ENCODE measurements at regions of chr18 and their contacts with region 1.

Region 1: DNA sequence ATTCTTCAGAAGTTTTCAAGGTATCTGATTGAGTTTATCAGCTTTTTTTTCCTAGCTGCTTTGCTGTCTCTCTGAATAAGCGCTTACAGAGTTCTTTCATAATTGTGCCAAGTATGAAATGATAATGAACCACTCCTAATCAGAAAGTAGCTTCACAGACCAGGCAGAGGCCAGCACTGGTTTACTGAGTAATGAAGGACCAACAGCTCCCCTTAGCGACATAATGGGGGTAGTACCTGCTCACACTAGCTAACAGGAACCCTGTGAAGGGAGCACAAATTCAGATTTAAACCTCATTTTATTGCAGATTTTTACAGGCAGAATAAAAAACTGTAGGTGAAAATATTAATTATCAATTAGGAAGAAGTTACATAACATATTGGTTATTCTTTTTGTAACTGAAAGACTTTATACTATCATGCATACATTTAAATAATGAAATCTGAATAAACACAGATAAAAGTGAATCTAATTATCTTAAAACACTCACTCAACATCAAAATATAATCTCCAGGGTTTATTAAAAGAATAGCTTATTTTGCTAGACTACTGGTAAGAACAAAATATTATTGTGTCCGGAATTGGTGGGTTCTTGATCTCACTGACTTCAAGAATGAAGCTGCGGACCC is 53.7 kb upstream of the LRRC30 start:
- DNase-seq: peak in 3 of 10 donors; percentile 20 to 67 (median 45)
- H3K4me3 ChIP-seq: no peak overlapping the region
- H3K27ac ChIP-seq: no peak overlapping the region
- H3K27me3 ChIP-seq: no peaks in the 10 kb centered on the region
- CTCF ChIP-seq: peak; percentile 27 to 77 (median 60)

Region 2: DNA sequence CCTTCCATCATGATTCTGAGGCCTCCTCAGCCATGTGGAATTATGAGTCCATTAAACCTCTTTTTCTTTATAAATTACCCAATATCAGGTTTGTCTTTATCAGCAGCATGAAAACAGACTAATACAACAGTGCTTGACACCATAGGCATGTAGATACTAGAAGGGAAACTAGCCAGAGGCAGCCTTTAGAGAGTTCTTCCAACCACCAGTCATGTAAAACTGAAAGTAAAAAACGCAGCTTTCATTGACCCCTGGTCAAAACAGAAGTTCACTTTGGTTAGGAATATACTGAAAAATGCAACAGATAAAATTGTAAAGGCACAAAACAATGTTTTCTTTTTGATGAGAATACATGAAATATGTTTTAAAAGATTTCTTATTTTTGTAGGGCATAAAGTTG is 639.8 kb before region 1 on chr18:
- intact Hi-C with region 1: no loop called
- DNase-seq: no peak
- H3K4me3 ChIP-seq: no peak overlapping the region
- H3K27ac ChIP-seq: no peak overlapping the region
- H3K27me3 ChIP-seq: peaks cover 0 to 5% (median 0%) of the 10 kb centered on the region in 45 donors
- CTCF ChIP-seq: no peak

Region 3: GRCh38 chr18:6920099-6920899 is 256.9 kb before region 1 on chr18:
- intact Hi-C with region 1: loop called in 1 of 2 experiments (anchors 5 kb)
- DNase-seq: peak in 3 of 10 donors; percentile 29 to 72 (median 55)
- H3K4me3 ChIP-seq: no peak overlapping the region
- H3K27ac ChIP-seq: peak overlapping the region in 1 of 59 donors; percentile 54
- H3K27me3 ChIP-seq: peaks cover 0 to 15% (median 0%) of the 10 kb centered on the region in 45 donors
- CTCF ChIP-seq: peak in 55 of 56 donors; percentile 16 to 72 (median 54)

Measured in dorsolateral prefrontal cortex (tissue), 120 donors.